MCF 10A (cell line): ENCODE measurements at regions of chr4 and their contacts with region 1.

Region 1: DNA sequence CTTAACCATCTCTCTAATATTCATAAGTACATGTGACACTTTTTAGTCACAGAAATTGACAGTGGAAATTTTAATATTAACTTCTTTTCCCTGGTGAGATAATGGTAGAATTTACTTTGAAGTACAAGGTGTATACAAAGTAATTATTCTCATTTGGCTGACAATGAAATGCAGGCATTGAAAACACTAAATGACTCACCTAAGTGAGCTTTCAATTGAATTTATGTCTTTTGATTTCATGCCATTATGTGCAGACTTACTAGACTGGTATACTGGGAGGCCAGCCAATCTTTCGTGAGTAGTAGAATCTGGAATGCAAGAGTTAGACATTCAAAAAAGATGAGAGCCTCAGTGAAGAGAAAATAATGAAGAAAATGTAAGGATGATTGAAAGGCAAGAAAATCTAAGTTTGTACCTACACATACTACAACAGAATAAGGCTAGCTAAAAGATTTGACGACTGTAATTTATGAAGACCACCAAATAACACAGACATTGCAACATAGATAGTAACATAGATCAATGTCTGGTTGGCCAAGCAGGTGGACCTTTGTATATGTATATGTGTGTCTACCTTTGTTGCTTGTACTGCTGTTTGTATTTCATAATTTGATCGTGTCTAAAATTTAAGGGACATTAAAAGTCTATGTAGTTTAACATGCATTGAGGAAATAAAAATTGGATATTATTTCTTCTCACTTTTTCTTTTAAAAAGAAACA is 459.7 kb downstream of the IL15 start:
- DNase-seq: peak; percentile 98
- H3K4me3 Mint-ChIP-seq: peak overlapping the region; percentile 7
- H3K27ac Mint-ChIP-seq: peak overlapping the region; percentile 86
- H3K4me1 Mint-ChIP-seq: peaks cover 27% of the 10 kb centered on the region
- H3K27me3 Mint-ChIP-seq: no peaks in the 10 kb centered on the region
- CTCF ChIP-seq: no peak

Region 2: DNA sequence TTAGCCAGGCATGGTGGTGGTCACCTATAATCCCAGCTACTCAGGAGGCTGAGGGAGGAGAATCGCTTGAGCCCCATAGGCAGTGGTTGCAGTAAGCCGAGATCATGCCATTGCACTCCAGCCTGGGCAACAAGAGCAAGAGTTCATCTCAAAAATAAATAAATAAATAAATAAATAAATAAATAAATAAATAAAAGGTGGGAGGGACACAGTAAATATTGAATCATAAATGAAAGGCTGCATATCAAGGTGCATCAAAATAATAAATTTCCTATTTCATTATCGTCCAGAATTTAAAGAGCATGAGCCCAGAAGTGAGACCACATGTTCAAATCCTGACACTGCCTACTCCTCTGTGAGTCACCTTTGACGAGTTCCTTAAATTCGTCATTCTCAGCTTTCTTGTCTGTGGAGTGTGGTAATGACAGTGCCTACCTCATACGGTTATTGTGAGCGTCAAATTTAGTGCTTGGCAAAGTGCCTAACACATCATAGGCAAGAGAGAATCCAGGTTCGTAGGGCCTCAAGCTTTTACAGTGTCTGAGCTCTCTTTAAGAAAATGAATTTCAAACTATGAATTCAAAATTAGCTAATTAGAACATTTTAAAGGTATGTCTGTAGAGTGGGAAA is 409.8 kb before region 1 on chr4:
- CTCF ChIA-PET with region 1: no interaction called
- POLR2A ChIA-PET with region 1: no interaction called
- intact Hi-C with region 1: loop called (anchors 5 kb)
- DNase-seq: peak; percentile 85
- H3K4me3 Mint-ChIP-seq: no peak overlapping the region
- H3K27ac Mint-ChIP-seq: no peak overlapping the region
- H3K4me1 Mint-ChIP-seq: peaks cover 6% of the 10 kb centered on the region
- H3K27me3 Mint-ChIP-seq: no peaks in the 10 kb centered on the region
- CTCF ChIP-seq: no peak